ENCODE measurements at regions of chr15 and their contacts with region 1.

Region 1: DNA sequence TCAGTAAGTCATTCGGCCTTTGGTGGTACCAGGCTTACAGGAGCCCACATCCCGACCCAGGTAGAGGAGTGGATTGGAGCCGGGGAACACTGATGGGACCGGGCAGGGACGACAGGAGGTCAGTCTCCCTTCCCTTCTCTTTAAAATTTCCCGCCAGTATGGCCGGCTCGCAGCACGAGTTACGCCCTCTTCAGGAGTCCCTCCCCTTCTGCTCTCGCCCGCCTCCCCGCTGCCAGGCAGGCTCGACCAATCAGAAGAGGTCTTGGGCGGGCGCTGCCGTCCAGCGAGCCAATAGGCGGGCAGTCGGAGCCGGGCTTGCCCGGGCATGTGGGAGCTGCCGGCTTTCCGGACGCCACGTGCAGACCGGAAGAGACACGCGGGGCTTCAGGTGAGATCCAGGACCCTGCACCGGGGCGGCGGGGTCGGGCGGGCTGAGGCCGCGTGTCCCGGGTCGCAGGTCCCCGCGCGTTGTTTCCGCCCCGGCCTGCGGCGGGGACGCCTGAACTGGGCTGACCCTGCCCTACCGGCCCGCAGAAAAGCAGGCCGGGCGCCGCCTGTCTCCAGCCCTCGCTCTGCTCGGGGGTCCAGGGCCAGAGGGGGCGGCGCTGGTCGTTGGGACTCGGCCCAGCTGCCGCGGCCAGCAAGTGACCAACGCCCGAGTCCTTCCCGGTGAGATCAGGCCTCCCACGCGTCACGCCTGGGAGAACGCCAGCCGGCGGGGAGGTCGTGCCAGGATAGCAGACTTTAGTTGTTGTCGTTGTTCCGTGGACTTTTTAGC is at the start of gene AEN:
- DNase-seq: peak; percentile 97
- ATAC-seq: peak; percentile 99
- total RNA-seq, gene AEN: 12.0 TPM

Region 2: GRCh38 chr15:88187153-88187552 is 434.0 kb before region 1 on chr15:
- intact Hi-C with region 1: no loop called
- DNase-seq: no peak
- ATAC-seq: no peak

Region 3: GRCh38 chr15:88664151-88664778 is 43.1 kb after region 1 on chr15:
- intact Hi-C with region 1: loop called (anchors 5 kb)
- DNase-seq: peak; percentile 54
- ATAC-seq: no peak

Region 4: GRCh38 chr15:88776646-88777045 is 155.5 kb after region 1 on chr15:
- intact Hi-C with region 1: no loop called
- DNase-seq: no peak
- ATAC-seq: no peak

Region 5: DNA sequence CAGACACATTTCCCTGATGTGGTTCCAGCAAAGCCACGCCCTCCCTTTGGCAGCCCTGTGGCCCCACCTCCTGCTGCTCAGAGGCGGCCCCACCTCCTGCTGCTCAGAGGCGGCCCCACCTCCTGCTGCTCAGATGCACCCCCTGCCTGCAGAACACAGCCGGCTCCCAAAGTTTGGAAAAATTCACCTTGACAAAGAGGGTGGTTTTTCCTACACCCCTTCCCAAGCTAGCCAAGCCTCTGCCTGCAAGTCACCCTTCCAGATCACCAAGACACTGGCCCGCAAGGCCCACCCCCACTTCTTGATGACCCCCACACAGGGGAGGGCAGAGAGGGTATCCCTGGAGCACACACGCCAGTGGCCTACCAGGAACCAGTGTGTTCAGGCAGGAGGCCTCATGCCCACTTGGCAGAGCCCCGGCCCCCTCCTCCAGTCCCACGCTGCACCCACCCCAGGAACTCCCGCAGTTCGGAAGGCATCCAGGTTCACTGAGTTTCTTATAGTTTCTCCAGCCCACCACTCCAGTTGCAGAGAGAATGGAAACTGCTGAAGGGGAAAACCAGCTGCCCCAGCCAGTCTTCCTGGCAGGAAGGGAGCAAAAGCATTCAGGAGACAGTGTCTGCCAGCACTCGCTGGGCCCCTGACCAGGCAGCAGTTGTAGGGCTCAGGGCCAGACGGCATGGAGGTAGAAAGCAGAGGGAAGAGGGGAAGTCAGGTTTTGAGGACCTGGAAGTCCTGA is 276.4 kb after region 1 on chr15:
- intact Hi-C with region 1: loop called (anchors 5 kb)
- DNase-seq: peak; percentile 93
- ATAC-seq: peak; percentile 92

Region 6: GRCh38 chr15:89017370-89018066 is 396.3 kb after region 1 on chr15:
- intact Hi-C with region 1: loop called (anchors 10 kb)
- DNase-seq: peak; percentile 86
- ATAC-seq: peak; percentile 64

Region 7: DNA sequence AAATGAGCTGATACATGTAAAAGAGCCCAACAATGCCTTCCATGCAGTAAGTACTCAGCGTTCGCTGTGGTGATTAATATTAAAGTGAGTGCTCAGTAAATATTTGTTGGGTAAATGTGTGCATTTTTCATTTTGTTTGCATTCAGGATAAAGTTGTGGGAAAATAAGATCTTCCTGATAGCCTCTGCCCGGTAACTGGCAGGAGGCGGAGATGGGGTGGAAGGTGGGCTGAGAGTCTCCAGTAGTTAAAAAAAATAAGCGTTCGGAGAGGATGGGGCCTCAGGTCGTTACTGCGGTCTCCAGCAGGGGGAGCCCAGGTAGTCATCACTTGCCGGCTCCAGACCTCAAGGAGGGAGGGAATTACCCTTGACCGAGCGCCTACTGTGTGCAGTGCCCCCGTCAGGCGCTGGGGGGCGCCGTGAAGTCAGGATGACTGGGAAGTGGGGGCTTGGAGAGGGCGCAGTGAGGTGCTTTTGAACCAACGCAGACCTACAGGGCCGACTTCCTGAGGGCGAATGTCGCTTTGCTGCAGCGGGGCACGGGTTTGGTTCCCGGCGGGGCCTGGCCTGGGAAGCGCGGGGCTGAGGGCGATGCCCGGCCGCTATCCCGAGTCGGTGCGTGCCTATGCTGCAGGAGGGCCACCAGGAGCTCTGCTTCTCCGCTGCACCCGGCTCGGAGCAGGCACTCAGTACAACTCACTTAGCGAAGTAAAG is 795.1 kb after region 1 on chr15:
- intact Hi-C with region 1: no loop called
- DNase-seq: no peak
- ATAC-seq: peak; percentile 48